PC-3 (cell line): ENCODE measurements at regions of chr14 and their contacts with region 1.

Region 1: DNA sequence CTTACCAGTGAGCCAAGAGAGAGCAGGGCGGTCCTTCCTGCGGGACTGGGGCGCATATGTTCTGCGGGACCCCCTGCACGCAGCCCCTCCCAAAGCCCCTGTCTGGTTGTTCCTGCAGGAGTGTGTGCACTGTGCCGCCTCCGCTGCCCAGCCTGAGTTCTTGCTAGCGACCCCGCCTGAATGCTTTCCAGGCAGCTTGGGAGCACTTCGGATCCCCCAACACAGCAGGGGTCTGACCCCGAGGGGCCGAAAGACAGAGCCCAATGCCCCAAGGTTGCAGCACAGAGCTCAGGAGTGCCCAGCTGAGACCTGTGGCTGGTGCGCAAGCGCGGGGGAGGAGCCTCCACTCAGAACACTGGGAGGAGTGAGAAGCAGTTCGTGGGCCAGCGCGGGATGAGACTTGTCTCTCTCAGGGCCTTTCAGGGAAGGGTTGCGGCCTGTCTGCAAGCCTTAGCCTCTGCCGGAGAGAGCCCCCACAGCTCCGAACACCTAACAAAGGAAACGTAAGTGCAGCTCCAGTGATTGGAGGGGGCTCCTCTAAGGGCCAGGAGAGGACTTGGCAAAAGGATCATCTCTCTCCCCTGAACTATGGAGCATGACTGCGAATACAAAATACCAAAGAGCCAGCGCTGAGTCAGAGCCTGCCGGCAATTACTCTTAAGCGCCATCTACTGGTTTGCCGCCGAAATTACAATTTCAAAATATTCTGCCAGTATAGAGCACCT is 50.5 kb downstream of the GTF2A1 start:
- DNase-seq: peak; percentile 84
- ATAC-seq: peak; percentile 99
- H3K4me3 ChIP-seq: peak overlapping the region; percentile 92
- H3K27ac ChIP-seq: peak overlapping the region; percentile 88
- H3K4me1 ChIP-seq: peaks cover 14% of the 10 kb centered on the region
- H3K27me3 ChIP-seq: no peaks in the 10 kb centered on the region
- CTCF ChIP-seq: peak; percentile 91

Region 2: DNA sequence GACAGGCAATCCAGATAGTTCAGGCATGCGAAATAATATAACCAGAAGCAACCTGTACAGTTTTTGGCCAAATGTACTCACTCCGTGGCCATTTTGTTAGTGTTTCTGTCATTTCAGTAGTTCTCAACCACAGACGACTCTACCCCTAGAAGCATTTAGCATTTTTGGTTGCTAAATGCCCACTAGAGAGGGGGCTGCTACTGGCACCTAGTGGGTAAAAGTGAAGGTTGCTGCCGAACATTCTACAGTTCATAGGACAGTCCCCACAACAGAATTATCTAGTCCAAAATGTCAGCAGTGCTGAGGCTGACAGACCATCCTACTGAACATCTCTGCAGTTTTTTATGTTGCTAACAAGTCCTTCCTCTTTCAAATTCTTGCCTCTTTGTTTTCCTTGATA is 107.5 kb before region 1 on chr14:
- CTCF ChIA-PET with region 1: no interaction called
- POLR2A ChIA-PET with region 1: no interaction called
- intact Hi-C with region 1: loop called (anchors 5 kb)
- DNase-seq: peak; percentile 51
- ATAC-seq: peak; percentile 80
- H3K4me3 ChIP-seq: peak overlapping the region; percentile 14; the same call in 1 of the 2 replicates
- H3K27ac ChIP-seq: no peak overlapping the region
- H3K4me1 ChIP-seq: peaks cover 10% of the 10 kb centered on the region; the same call in 1 of the 2 replicates
- H3K27me3 ChIP-seq: peaks cover 31% of the 10 kb centered on the region; the same call in 1 of the 2 replicates
- CTCF ChIP-seq: peak; percentile 71

Region 3: GRCh38 chr14:81147140-81147897 is 22.9 kb before region 1 on chr14:
- CTCF ChIA-PET with region 1: no interaction called
- POLR2A ChIA-PET with region 1: no interaction called
- intact Hi-C with region 1: no loop called
- DNase-seq: no peak
- ATAC-seq: no peak
- H3K4me3 ChIP-seq: no peak overlapping the region
- H3K27ac ChIP-seq: no peak overlapping the region
- H3K4me1 ChIP-seq: no peaks in the 10 kb centered on the region
- H3K27me3 ChIP-seq: no peaks in the 10 kb centered on the region
- CTCF ChIP-seq: no peak